ENCODE measurements at regions of chr19 and their contacts with region 1.

Region 1: DNA sequence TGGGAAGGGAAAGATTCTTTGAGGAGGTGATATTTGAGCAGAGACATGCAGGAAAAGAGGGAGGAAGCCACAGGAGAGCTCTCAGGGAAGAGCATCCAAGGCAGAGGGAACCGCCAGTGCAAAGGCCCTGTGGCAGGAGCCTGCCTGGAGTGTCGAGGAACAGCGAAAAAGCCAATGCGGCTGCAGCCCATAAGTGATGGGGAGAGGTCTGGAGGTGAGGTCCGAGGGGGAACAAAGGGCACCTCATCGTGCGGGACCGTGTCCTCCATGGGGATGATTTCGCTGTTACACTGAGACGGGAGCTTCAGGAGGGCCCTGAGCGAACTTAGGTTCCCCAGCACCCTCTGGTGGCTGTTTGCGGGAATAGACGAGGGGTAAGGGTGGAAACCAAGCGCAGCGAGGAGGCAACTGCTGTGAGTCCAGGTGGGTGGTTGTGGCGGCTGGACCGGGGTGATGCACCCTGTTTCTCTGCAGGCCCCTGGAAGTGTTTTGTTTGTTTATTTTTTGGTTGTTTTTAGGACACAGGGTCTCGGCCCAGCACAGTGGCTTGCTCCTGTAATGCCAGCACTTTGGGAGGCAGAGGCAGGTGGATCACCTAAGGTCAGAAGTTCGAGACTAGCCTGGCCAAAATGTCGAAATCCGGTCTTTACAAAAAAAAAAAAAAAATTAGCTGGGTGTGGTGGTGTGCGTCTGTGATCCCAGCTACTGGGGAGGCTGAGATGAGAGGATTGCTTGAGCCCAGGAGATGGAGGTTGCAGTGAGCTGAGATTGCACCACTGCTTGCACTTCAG is 5.9 kb upstream of the EHD2 start:
- DNase-seq: peak; percentile 49 to 69 (median 60)
- H3K4me3 ChIP-seq: no peak overlapping the region
- H3K4me3 Mint-ChIP-seq: peak overlapping the region in 1 of 2 donors; percentile 32
- H3K27ac ChIP-seq: no peak overlapping the region
- H3K27ac Mint-ChIP-seq: no peak overlapping the region
- H3K4me1 ChIP-seq: no peaks in the 10 kb centered on the region
- H3K4me1 Mint-ChIP-seq: peaks cover 6% of the 10 kb centered on the region
- H3K27me3 ChIP-seq: peaks cover 0 to 2% of the 10 kb centered on the region in 2 donors
- H3K27me3 Mint-ChIP-seq: peaks cover 7 to 16% (median 12%) of the 10 kb centered on the region in 3 donors
- CTCF ChIP-seq: peak; percentile 82

Region 2: GRCh38 chr19:47745010-47745901 is 37.9 kb after region 1 on chr19 and contains the start of gene NOP53:
- intact Hi-C with region 1: loop called (anchors 2 to 5 kb)
- DNase-seq: peak; percentile 95 to 97 (median 96)
- H3K4me3 ChIP-seq: peak within 1 kb of the TSS; percentile 72 to 85 (median 82)
- H3K4me3 Mint-ChIP-seq: peak within 1 kb of the TSS; percentile 94 to 96
- H3K27ac ChIP-seq: peak within 1 kb of the TSS; percentile 81 to 94
- H3K27ac Mint-ChIP-seq: peak within 1 kb of the TSS; percentile 95 to 100 (median 99)
- H3K4me1 ChIP-seq: peaks cover 34 to 46% of the 10 kb centered on the region in 2 donors
- H3K4me1 Mint-ChIP-seq: peaks cover 33% of the 10 kb centered on the region
- H3K27me3 ChIP-seq: no peaks in the 10 kb centered on the region
- H3K27me3 Mint-ChIP-seq: peaks cover 3 to 7% (median 4%) of the 10 kb centered on the region in 3 donors
- CTCF ChIP-seq: no peak
- polyA plus RNA-seq, gene NOP53: 47.5 to 193 (median 70.4) TPM